ENCODE measurements at regions of chr7 and their contacts with region 1.

Region 1: GRCh38 chr7:151459726-151460473 is 20.0 kb upstream of the CRYGN start:
- DNase-seq: peak in 1 of 2 experiments; percentile 67
- H3K4me3 ChIP-seq: peak overlapping the region in 1 of 4 experiments; percentile 4; a peak in 1 of 8 replicates
- H3K27ac ChIP-seq: no peak overlapping the region; the same call in 1 of the 2 replicates
- H3K4me1 ChIP-seq: peaks cover 14 to 36% (median 25%) of the 10 kb centered on the region in 4 experiments
- H3K27me3 ChIP-seq: no peaks in the 10 kb centered on the region
- CTCF ChIP-seq: no peak
- EP300 ChIP-seq: no peak
- POLR2A ChIP-seq: no peak; a peak in 1 of 3 replicates
- RAD21 ChIP-seq: no peak

Region 2: DNA sequence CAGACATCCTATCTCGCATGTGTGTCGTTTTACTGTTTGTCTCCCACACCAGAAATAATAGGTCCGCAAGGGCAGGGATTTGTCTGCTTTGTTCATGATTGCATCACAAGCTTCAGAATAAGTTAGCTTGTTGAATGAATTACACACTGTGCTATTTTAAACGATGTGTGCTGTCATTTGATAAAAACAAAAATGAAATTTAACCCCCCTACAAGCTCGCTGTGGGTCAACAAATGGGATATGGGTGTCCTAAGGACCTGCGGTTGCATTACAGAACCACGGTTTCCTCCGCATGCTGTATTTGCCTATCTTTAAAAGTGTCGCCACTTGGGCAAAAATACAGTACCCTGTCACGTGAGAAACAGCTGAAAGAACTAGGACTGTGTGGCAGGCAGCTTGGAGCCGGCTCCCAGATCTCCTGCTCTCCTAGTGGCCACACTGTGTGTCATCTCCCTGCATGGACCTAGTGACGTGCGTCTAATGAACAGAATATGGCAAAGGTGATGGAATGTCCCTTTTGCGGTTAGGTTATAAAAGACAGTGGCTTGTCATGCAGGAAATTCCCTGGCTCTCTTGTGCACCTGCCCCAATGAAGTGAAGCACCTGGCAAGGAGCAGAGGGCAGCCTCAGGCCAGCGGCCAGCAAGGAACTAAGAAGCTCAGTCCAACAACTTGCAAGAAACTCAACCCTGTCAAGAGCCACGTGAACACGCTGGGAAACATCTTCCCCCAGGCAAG is 12.9 kb after region 1 on chr7:
- CTCF ChIA-PET with region 1: interaction called, 4 read pairs
- POLR2A ChIA-PET with region 1: interaction called, 29 read pairs
- DNase-seq: no peak
- H3K4me3 ChIP-seq: peak overlapping the region in 1 of 4 experiments; percentile 22; a peak in 1 of 8 replicates
- H3K27ac ChIP-seq: peak overlapping the region; percentile 19; the same call in 1 of the 2 replicates
- H3K4me1 ChIP-seq: peaks cover 15 to 32% (median 28%) of the 10 kb centered on the region in 4 experiments
- H3K27me3 ChIP-seq: no peaks in the 10 kb centered on the region
- CTCF ChIP-seq: no peak
- EP300 ChIP-seq: no peak
- POLR2A ChIP-seq: no peak
- RAD21 ChIP-seq: no peak; a peak in 1 of 4 replicates

Region 3: GRCh38 chr7:151481650-151482505 is 22.0 kb after region 1 on chr7:
- CTCF ChIA-PET with region 1: interaction called, 13 read pairs
- POLR2A ChIA-PET with region 1: interaction called, 3 read pairs
- DNase-seq: no peak
- H3K4me3 ChIP-seq: no peak overlapping the region
- H3K27ac ChIP-seq: no peak overlapping the region
- H3K4me1 ChIP-seq: peaks cover 0 to 7% (median 2%) of the 10 kb centered on the region in 4 experiments; a peak in 3 of 7 replicates
- H3K27me3 ChIP-seq: no peaks in the 10 kb centered on the region
- CTCF ChIP-seq: no peak
- EP300 ChIP-seq: no peak
- POLR2A ChIP-seq: no peak
- RAD21 ChIP-seq: no peak